Dorsolateral prefrontal cortex (tissue), 120 donors: ENCODE measurements at regions of chr3 and their contacts with region 1.

Region 1: GRCh38 chr3:136075218-136075808 is 109.8 kb downstream of the PPP2R3A start:
- DNase-seq: peak; percentile 42 to 88 (median 65)
- H3K4me3 ChIP-seq: no peak overlapping the region
- H3K27ac ChIP-seq: peak overlapping the region in 6 of 59 donors; percentile 10 to 51 (median 23)
- H3K27me3 ChIP-seq: no peaks in the 10 kb centered on the region
- CTCF ChIP-seq: peak; percentile 85 to 99 (median 95)

Region 2: GRCh38 chr3:136196401-136197158 is 121.3 kb after region 1 on chr3:
- intact Hi-C with region 1: loop called (anchors 2 kb)
- DNase-seq: peak; percentile 93 to 97 (median 95)
- H3K4me3 ChIP-seq: peak overlapping the region; percentile 66 to 98 (median 91)
- H3K27ac ChIP-seq: peak overlapping the region; percentile 91 to 100 (median 100)
- H3K27me3 ChIP-seq: no peaks in the 10 kb centered on the region
- CTCF ChIP-seq: peak in 17 of 56 donors; percentile 4 to 45 (median 19)

Region 3: DNA sequence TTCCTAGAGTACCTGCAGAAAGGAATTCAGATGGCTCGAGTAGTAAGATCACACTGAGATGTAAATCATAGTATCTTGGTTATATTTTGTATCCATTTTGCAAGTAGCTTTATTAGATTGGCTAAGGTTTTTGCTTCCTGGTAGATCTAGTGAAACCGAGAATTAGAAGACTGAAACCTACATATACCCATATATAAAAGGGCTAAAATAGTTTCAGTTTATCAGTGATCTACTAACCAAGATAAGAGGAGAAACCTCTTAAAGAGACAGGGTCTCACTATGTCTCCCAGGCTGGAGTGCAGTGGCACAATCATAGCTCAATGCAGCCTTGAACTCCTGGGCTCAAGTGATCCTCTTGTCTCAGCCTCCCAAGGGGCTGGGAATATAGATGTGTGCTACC is 310.1 kb after region 1 on chr3:
- intact Hi-C with region 1: loop called (anchors 5 to 10 kb)
- DNase-seq: no peak
- H3K4me3 ChIP-seq: no peak overlapping the region
- H3K27ac ChIP-seq: no peak overlapping the region
- H3K27me3 ChIP-seq: no peaks in the 10 kb centered on the region
- CTCF ChIP-seq: no peak

Region 4: DNA sequence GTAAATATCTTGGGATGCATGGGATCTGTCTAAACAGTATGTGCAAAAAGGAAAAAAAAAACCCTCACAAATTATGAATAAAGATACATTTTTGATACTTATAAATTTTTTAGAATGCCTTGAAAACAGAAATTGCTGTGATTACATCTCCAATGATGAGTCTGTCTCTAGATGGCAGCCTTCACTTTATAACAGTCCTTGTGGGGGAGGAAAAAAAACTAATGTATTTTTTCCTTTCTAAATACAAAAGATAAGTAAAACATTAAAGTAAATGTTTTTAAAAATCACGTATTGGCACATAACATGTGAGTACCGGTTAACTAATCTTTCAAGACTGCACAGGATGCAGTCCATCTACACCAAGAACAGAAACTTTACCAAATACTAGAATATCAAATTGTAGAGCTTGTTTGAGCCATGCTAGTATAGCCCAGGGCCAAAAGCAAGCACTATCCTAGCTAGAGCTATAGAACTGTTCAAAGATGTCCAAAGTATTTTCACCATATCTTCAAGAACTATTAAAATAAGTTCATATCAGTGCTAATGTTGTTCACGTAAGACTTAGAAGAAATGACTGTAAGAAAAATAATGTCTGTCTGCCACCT is 470.5 kb after region 1 on chr3:
- intact Hi-C with region 1: loop called (anchors 5 to 10 kb)
- DNase-seq: no peak
- H3K4me3 ChIP-seq: peak overlapping the region in 1 of 59 donors; percentile 25
- H3K27ac ChIP-seq: peak overlapping the region in 47 of 59 donors; percentile 1 to 77 (median 55)
- H3K27me3 ChIP-seq: no peaks in the 10 kb centered on the region
- CTCF ChIP-seq: peak in 55 of 56 donors; percentile 6 to 87 (median 59)

Region 5: DNA sequence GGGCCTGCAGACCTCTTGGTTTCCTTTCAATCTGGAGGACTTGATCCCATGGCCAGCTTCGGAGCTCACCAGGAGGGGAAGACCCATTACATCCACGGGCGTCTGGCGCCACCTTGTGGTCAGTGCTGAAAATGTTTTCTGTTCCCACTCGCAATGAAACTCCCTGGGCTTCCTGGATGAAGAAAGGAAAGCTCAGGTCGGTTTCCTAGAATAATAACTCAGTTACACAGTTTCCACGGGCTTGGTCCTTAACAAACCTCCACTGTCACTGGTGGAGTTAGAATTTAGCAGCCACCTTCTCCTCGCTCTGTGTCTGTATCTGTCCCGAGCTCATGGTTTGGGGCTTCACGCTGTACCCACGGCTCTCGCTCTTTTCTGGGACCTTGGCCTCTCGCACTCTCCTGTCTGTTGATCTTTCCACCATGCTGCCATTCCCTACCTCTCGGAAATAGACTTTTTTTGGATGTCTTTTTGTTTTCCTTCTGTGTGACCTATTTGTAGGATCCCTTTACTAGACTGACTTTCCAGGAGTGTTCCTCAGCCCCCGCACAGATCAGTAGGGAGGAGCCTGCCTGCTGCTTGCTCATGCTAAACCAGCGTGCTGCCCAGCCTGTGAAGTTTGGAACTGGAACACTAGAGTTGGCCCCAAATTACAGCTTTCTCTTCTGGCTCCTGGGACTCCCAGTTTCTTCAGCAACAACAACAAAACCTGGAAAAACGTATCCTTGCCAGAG is 938.8 kb after region 1 on chr3:
- intact Hi-C with region 1: loop called (anchors 2 to 5 kb)
- DNase-seq: peak; percentile 86 to 95 (median 92)
- H3K4me3 ChIP-seq: peak overlapping the region; percentile 11 to 71 (median 53)
- H3K27ac ChIP-seq: peak overlapping the region in 28 of 59 donors; percentile 1 to 83 (median 42)
- H3K27me3 ChIP-seq: no peaks in the 10 kb centered on the region
- CTCF ChIP-seq: peak; percentile 89 to 99 (median 96)